ENCODE measurements at regions of chr7 and their contacts with region 1.

Region 1: GRCh38 chr7:92621026-92621540 is 30.9 kb upstream of the FAM133B start:
- DNase-seq: peak; percentile 90
- ATAC-seq: peak; percentile 78
- H3K4me3 Mint-ChIP-seq: peak overlapping the region; percentile 0
- H3K27ac Mint-ChIP-seq: peak overlapping the region; percentile 90
- H3K4me1 Mint-ChIP-seq: peaks cover 50% of the 10 kb centered on the region
- H3K27me3 Mint-ChIP-seq: no peaks in the 10 kb centered on the region

Region 2: DNA sequence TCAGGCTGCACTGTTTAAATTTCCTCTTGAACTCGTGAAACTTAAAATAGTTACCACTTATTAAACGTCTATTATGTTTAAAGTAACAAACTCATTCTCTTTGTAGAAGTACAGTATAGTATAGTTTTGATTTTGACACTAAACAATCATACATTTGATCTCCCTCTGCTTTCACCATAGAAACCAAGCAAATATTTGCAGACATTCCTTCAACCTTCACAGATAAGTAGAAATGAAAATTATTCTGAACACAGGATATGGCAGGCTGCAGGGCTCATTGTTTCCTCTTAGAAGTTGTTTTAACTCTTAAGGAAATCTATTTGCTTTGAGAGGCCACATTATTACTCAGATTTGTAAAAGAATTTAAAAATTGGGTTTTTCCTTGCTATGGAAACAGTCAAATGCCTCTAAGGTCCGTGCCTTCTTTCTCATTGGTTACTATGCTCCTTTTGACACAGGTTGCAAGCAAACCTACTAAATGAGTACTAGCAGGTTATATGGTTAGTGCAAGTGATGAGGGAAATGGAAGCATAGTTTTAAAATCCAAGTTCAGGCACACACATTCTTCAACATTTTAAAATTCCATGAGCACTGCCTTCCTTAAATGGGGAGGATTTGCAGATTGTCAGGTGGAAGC is 61.9 kb after region 1 on chr7:
- CTCF ChIA-PET with region 1: interaction called, 5 read pairs
- POLR2A ChIA-PET with region 1: no interaction called
- intact Hi-C with region 1: loop called in 1 of 2 experiments (anchors 1 kb)
- DNase-seq: no peak
- ATAC-seq: peak; percentile 53
- H3K4me3 Mint-ChIP-seq: peak overlapping the region; percentile 39
- H3K27ac Mint-ChIP-seq: peak overlapping the region; percentile 88
- H3K4me1 Mint-ChIP-seq: peaks cover 83% of the 10 kb centered on the region
- H3K27me3 Mint-ChIP-seq: no peaks in the 10 kb centered on the region

Measured in activated CD4-positive, alpha-beta T cell treated with anti-CD3 and anti-CD28 coated beads for 36 hours (primary cell).